GM13977 (cell line): ENCODE measurements at regions of chr3 and their contacts with region 1.

Region 1: GRCh38 chr3:138935848-138936740 is 10.8 kb downstream of the FOXL2 start:
- DNase-seq: peak; percentile 92
- CTCF ChIP-seq: peak; percentile 97

Region 2: DNA sequence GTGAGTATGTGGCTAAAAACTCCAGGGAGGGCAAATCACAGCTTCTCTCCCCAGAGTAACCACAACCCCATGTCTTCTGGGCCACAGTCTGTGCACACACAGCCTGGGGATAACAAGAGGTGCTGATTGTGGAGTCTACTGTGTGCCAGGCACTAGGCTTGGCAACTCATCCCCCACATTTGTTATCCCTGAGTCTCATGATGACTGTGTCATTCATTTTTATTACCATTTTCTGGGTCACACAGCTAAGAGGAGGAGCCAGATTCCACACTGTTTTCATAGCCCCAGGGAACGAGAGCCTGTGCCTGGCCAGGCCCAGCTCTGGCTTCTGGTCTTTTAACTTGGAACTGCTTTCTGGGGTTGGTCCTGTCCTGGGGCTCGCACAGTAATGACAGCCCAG is 467.2 kb before region 1 on chr3:
- in situ Hi-C with region 1: loop called (anchors 25 kb)
- DNase-seq: no peak
- CTCF ChIP-seq: no peak

Region 3: DNA sequence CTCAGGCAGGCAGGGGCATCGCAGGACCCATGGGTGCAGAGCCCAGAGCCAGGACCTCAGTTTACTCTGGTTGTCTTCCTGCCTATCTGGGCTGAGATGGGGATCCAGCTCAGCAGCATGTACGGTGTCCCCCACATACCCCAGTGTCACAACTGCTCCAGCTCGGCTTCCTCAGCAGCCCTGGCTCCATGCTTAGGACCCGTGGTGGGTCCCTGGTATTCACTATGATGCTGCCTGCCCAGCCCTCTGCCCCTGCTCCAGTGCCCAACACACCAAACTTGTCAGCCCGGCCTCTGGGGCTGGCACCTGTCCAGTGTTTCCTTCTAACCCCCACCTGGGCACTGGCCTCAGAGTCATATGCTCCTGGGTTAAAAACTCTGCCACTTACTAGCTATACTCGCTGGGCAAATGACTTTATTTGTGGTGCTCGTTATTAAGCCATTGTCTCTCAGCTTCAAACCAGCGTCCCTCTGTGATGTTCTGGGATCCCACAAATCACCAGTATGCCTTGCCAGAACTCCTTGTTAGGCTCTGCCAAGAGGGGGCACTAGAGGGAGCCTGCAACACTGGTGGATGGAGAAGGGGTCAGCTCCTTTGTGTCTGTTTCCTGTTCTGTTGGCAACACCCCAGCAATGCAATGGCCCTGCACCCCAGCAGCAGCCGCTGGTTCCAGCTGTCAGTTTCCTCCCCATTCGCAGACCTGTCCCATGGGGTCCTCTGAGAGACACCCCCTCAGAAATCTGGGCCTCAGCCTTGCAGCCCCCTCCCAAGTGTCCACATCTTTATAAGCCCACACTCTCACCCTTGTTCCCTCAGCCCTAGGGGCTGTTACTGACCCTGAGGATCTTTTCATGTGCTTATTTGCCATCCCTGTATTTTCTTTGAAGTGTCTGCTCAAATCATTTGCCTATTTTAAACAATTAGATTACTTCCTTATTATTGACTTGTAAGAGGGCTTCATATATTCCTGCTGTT is 383.6 kb after region 1 on chr3:
- in situ Hi-C with region 1: loop called (anchors 25 kb)
- DNase-seq: no peak
- CTCF ChIP-seq: peak; percentile 32